K562 (cell line): ENCODE measurements at regions of chr4 and their contacts with region 1.

Region 1: DNA sequence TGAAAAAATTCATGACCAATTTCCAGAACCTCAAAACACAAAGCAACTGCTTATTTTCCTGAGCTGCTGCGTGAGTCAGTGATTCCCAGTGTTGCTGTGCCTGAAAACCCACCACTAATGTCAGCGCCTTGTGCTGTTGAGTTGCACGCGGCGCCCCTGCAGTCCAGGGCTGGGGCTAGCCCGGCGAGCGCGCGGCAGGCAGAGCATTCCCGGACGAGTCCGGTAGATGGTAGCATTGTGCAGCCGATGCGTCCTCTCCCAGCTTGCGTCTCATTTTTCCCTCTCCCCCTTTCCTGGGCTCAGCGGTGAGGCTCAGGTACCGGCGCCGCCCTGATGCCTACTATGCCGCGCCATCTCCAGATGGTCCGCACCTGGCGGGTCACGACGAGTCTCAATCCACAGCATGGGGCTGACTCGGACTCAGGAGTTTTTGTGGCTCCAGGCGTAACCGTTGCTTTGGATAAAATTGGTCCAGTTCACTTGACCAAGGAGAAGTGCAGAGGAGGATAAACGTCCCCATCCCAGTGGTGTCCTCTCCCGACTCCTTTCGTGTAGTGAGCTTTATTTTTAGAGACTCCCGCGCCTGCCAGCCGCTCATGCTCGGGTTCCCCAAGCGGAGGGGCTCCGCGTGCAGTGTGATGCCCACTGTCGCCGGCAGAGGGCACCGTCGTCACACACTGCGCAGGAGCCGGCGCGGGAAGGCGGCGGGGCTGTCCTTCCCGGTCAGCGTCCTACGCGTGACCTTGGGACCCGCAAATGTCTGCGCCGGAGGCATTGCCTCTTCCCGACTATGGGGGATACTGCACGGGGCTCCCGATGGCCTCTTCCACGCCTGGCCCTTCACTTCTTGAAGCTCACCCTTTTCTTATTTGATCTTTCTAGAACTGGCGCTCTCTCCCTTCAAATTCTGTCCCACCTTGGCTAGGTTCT is 53.6 kb upstream of the IGFBP7 start:
- DNase-seq: peak; percentile 74 to 84 (median 80)
- ATAC-seq: peak; percentile 99
- H3K4me3 ChIP-seq: peak overlapping the region; percentile 40
- H3K27ac ChIP-seq: no peak overlapping the region
- H3K4me1 ChIP-seq: peaks cover 0 to 10% of the 10 kb centered on the region in 2 experiments; a peak in 2 of 5 replicates
- H3K27me3 ChIP-seq: no peaks in the 10 kb centered on the region
- CTCF ChIP-seq: peak; percentile 85 to 96 (median 88)
- EP300 ChIP-seq: no peak
- POLR2A ChIP-seq: no peak
- RAD21 ChIP-seq: peak; percentile 39 to 65; a peak in 3 of 4 replicates

Region 2: GRCh38 chr4:57037982-57038604 is 125.7 kb before region 1 on chr4:
- CTCF ChIA-PET with region 1: no interaction called
- POLR2A ChIA-PET with region 1: no interaction called
- in situ Hi-C with region 1: no loop called
- intact Hi-C with region 1: loop called (anchors 2 kb)
- DNase-seq: peak; percentile 59 to 72 (median 66)
- ATAC-seq: peak; percentile 95
- H3K4me3 ChIP-seq: no peak overlapping the region
- H3K27ac ChIP-seq: no peak overlapping the region
- H3K4me1 ChIP-seq: no peaks in the 10 kb centered on the region
- H3K27me3 ChIP-seq: peaks cover 16 to 17% of the 10 kb centered on the region in 2 experiments; a peak in 4 of 5 replicates
- CTCF ChIP-seq: peak; percentile 81 to 90 (median 85)
- EP300 ChIP-seq: no peak
- POLR2A ChIP-seq: no peak
- RAD21 ChIP-seq: peak; percentile 37 to 71

Region 3: GRCh38 chr4:57430726-57431125 is 266.9 kb after region 1 on chr4:
- CTCF ChIA-PET with region 1: no interaction called
- POLR2A ChIA-PET with region 1: no interaction called
- in situ Hi-C with region 1: no loop called
- intact Hi-C with region 1: loop called (anchors 10 kb)
- DNase-seq: no peak
- ATAC-seq: no peak
- H3K4me3 ChIP-seq: no peak overlapping the region
- H3K27ac ChIP-seq: no peak overlapping the region
- H3K4me1 ChIP-seq: no peaks in the 10 kb centered on the region
- H3K27me3 ChIP-seq: no peaks in the 10 kb centered on the region
- CTCF ChIP-seq: no peak
- EP300 ChIP-seq: no peak
- POLR2A ChIP-seq: no peak
- RAD21 ChIP-seq: no peak